Naive thymus-derived CD4-positive, alpha-beta T cell (primary cell): ENCODE measurements at regions of chr5 and their contacts with region 1.

Region 1: GRCh38 chr5:131289738-131290137 is 25.9 kb downstream of the CDC42SE2 start:
- DNase-seq: peak in 1 of 9 donors; percentile 22
- ATAC-seq: peak; percentile 58
- H3K4me3 ChIP-seq: peak overlapping the region; percentile 55
- H3K4me3 Mint-ChIP-seq: peak overlapping the region; percentile 58 to 92 (median 86)
- H3K27ac ChIP-seq: peak overlapping the region; percentile 75
- H3K27ac Mint-ChIP-seq: peak overlapping the region; percentile 87 to 98 (median 94)
- H3K4me1 ChIP-seq: peaks cover 66 to 76% of the 10 kb centered on the region in 2 donors
- H3K4me1 Mint-ChIP-seq: peaks cover 40 to 94% (median 81%) of the 10 kb centered on the region in 7 donors
- H3K27me3 ChIP-seq: no peaks in the 10 kb centered on the region
- H3K27me3 Mint-ChIP-seq: no peaks in the 10 kb centered on the region

Region 2: DNA sequence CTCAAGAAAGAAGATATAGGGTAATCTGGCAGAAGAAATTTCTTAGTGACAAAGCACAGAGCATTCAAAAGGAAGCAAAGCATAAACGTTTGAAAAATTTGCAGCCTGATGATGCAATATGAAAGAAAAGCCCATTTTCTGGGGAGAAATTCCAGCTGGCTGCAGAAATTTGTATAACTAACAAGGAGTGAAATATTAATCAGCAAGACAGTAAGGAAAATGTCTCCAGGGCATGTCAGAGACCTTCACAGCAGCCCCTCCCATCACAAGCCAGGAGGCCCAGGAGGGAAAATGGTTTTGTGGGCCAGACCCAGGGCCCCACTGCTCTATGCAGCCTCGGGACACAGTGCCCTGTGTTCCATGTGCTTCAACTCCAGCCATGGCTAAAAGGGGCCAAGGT is 484.1 kb before region 1 on chr5:
- CTCF ChIA-PET with region 1: no interaction called
- POLR2A ChIA-PET with region 1: no interaction called
- intact Hi-C with region 1: no loop called
- DNase-seq: no peak
- ATAC-seq: no peak
- H3K4me3 ChIP-seq: no peak overlapping the region
- H3K4me3 Mint-ChIP-seq: no peak overlapping the region
- H3K27ac ChIP-seq: no peak overlapping the region
- H3K27ac Mint-ChIP-seq: no peak overlapping the region
- H3K4me1 ChIP-seq: no peaks in the 10 kb centered on the region
- H3K4me1 Mint-ChIP-seq: no peaks in the 10 kb centered on the region
- H3K27me3 ChIP-seq: no peaks in the 10 kb centered on the region
- H3K27me3 Mint-ChIP-seq: peaks cover 0 to 34% (median 16%) of the 10 kb centered on the region in 5 donors

Region 3: GRCh38 chr5:131252824-131253171 is 36.9 kb before region 1 on chr5:
- CTCF ChIA-PET with region 1: no interaction called
- POLR2A ChIA-PET with region 1: interaction called, 18 read pairs
- intact Hi-C with region 1: loop called in 1 of 2 experiments (anchors 5 kb)
- DNase-seq: peak; percentile 41 to 90 (median 87)
- ATAC-seq: peak; percentile 93
- H3K4me3 ChIP-seq: peak overlapping the region; percentile 72
- H3K4me3 Mint-ChIP-seq: peak overlapping the region; percentile 80 to 97 (median 96)
- H3K27ac ChIP-seq: peak overlapping the region; percentile 78
- H3K27ac Mint-ChIP-seq: peak overlapping the region; percentile 91 to 97 (median 95)
- H3K4me1 ChIP-seq: peaks cover 51 to 54% of the 10 kb centered on the region in 2 donors
- H3K4me1 Mint-ChIP-seq: peaks cover 62 to 89% (median 67%) of the 10 kb centered on the region in 7 donors
- H3K27me3 ChIP-seq: no peaks in the 10 kb centered on the region
- H3K27me3 Mint-ChIP-seq: no peaks in the 10 kb centered on the region

Region 4: DNA sequence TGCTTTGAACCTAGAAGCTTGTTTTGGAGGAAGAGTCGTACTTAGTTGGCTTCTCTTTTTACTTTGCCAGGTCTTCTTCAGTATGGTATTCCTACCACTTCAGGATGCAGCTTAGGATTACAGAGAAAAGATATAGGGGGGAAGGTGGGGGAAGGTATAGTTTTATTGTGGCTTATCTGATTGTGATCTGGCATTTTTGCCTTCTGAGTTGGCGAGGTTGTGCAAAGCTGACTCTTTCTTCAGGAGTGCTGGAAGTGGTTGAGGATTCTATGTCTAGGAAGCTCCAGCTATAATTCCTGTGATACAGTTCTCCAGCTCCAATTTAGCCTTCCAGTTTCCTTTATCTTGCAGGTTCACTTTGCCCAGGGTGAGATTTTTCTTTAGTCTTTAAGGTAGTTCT is 18.9 kb before region 1 on chr5:
- CTCF ChIA-PET with region 1: interaction called, 6 read pairs
- POLR2A ChIA-PET with region 1: interaction called, 28 read pairs
- intact Hi-C with region 1: loop called in 1 of 2 experiments (anchors 1 kb)
- DNase-seq: no peak
- ATAC-seq: no peak
- H3K4me3 ChIP-seq: peak overlapping the region; percentile 29
- H3K4me3 Mint-ChIP-seq: peak overlapping the region; percentile 63 to 90 (median 84)
- H3K27ac ChIP-seq: peak overlapping the region; percentile 74
- H3K27ac Mint-ChIP-seq: peak overlapping the region; percentile 48 to 96 (median 91)
- H3K4me1 ChIP-seq: peaks cover 49 to 66% of the 10 kb centered on the region in 2 donors
- H3K4me1 Mint-ChIP-seq: peaks cover 50 to 83% (median 68%) of the 10 kb centered on the region in 7 donors
- H3K27me3 ChIP-seq: no peaks in the 10 kb centered on the region
- H3K27me3 Mint-ChIP-seq: no peaks in the 10 kb centered on the region

Region 5: GRCh38 chr5:131303537-131303936 is 13.8 kb after region 1 on chr5:
- CTCF ChIA-PET with region 1: no interaction called
- POLR2A ChIA-PET with region 1: interaction called, 3 read pairs
- intact Hi-C with region 1: loop called in 1 of 2 experiments (anchors 1 kb)
- DNase-seq: no peak
- ATAC-seq: no peak
- H3K4me3 ChIP-seq: no peak overlapping the region
- H3K4me3 Mint-ChIP-seq: peak overlapping the region in 5 of 10 donors; percentile 0 to 46 (median 28)
- H3K27ac ChIP-seq: peak overlapping the region; percentile 23
- H3K27ac Mint-ChIP-seq: peak overlapping the region in 6 of 9 donors; percentile 2 to 62 (median 36)
- H3K4me1 ChIP-seq: peaks cover 45 to 55% of the 10 kb centered on the region in 2 donors
- H3K4me1 Mint-ChIP-seq: peaks cover 53 to 77% (median 71%) of the 10 kb centered on the region in 7 donors
- H3K27me3 ChIP-seq: no peaks in the 10 kb centered on the region
- H3K27me3 Mint-ChIP-seq: no peaks in the 10 kb centered on the region